Activated naive CD4-positive, alpha-beta T cell treated with anti-CD3 and anti-CD28 coated beads for 36 hours (primary cell): ENCODE measurements at regions of chr11 and their contacts with region 1.

Region 1: GRCh38 chr11:62905927-62906531 is 15.1 kb downstream of the CHRM1 start:
- DNase-seq: peak; percentile 89
- H3K4me3 Mint-ChIP-seq: no peak overlapping the region
- H3K27ac Mint-ChIP-seq: no peak overlapping the region
- H3K4me1 Mint-ChIP-seq: peaks cover 18% of the 10 kb centered on the region
- H3K27me3 Mint-ChIP-seq: peaks cover 5% of the 10 kb centered on the region

Region 2: GRCh38 chr11:62974848-62975522 is 69.0 kb after region 1 on chr11:
- CTCF ChIA-PET with region 1: interaction called, 55 read pairs
- intact Hi-C with region 1: loop called (anchors 1 kb)
- DNase-seq: peak; percentile 24
- H3K4me3 Mint-ChIP-seq: no peak overlapping the region
- H3K27ac Mint-ChIP-seq: no peak overlapping the region
- H3K4me1 Mint-ChIP-seq: no peaks in the 10 kb centered on the region
- H3K27me3 Mint-ChIP-seq: peaks cover 8% of the 10 kb centered on the region

Region 3: GRCh38 chr11:63007920-63008319 is 101.9 kb after region 1 on chr11:
- CTCF ChIA-PET with region 1: interaction called, 23 read pairs
- intact Hi-C with region 1: no loop called
- DNase-seq: no peak
- H3K4me3 Mint-ChIP-seq: no peak overlapping the region
- H3K27ac Mint-ChIP-seq: no peak overlapping the region
- H3K4me1 Mint-ChIP-seq: no peaks in the 10 kb centered on the region
- H3K27me3 Mint-ChIP-seq: no peaks in the 10 kb centered on the region

Region 4: DNA sequence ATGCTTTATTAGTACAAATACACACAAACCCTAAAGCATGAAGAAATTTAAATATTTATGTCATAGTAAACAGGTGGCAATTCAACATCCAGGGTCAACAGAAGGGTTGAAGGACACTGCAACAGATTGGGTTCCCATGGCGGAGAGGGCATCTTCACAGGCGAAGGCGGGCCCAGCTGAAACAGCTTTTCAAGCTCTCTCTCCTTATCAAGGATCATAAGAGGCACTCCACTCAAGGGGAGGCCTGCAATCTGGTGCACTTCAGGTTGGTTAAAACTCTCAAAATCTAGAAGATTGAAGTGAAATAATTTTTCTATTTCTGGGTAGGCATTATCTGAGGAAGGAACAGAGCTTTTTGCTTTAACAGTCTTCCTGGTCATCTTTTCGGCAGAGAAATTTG is 126.4 kb after region 1 on chr11:
- CTCF ChIA-PET with region 1: interaction called, 397 read pairs
- intact Hi-C with region 1: no loop called
- DNase-seq: no peak
- H3K4me3 Mint-ChIP-seq: no peak overlapping the region
- H3K27ac Mint-ChIP-seq: no peak overlapping the region
- H3K4me1 Mint-ChIP-seq: no peaks in the 10 kb centered on the region
- H3K27me3 Mint-ChIP-seq: peaks cover 10% of the 10 kb centered on the region